Activated B cell treated with CpG ODN at 0.5 μM for 24 hours (primary cell): ENCODE measurements at regions of chr10 and their contacts with region 1.

Region 1: DNA sequence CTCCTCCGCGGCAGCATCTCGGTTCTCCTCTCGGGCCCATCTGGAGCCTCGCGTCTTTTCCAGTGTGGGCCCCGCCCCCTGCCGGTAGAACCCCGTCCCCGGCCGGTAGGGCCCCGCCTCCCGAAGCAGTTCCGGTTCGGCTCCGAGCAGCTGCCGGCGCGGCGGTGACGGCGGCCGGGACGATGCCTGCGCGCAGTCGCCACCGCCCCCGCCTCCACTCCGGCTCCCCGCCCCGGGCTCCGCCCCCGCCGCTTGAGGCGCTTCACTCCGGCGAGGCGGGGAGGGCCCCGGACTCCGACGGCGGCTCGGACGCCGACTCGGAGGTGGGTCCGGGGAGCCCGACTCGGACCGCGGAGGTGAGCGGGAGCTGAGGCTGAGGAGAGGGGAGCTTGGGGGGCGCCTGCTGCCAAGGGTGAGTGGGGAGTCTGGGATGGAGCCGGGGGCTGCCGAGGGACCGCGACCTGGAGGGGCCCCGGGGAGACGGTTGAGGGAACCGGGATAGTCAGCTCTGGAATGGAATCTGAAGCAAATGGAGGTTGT is at the start of gene SAMD8:
- DNase-seq: peak; percentile 95
- ATAC-seq: peak; percentile 81
- H3K4me3 Mint-ChIP-seq: peak within 1 kb of the TSS; percentile 90
- H3K27ac Mint-ChIP-seq: peak within 1 kb of the TSS; percentile 90
- H3K4me1 Mint-ChIP-seq: peaks cover 45% of the 10 kb centered on the region
- H3K27me3 Mint-ChIP-seq: no peaks in the 10 kb centered on the region
- CTCF ChIP-seq: no peak
- total RNA-seq, gene SAMD8: 25.8 and 29.1 TPM in 2 replicates

Region 2: GRCh38 chr10:74628136-74628535 is 483.3 kb before region 1 on chr10:
- CTCF ChIA-PET with region 1: no interaction called
- POLR2A ChIA-PET with region 1: no interaction called
- intact Hi-C with region 1: no loop called
- DNase-seq: no peak
- ATAC-seq: no peak
- H3K4me3 Mint-ChIP-seq: no peak overlapping the region
- H3K27ac Mint-ChIP-seq: no peak overlapping the region
- H3K4me1 Mint-ChIP-seq: no peaks in the 10 kb centered on the region
- H3K27me3 Mint-ChIP-seq: no peaks in the 10 kb centered on the region
- CTCF ChIP-seq: no peak

Region 3: DNA sequence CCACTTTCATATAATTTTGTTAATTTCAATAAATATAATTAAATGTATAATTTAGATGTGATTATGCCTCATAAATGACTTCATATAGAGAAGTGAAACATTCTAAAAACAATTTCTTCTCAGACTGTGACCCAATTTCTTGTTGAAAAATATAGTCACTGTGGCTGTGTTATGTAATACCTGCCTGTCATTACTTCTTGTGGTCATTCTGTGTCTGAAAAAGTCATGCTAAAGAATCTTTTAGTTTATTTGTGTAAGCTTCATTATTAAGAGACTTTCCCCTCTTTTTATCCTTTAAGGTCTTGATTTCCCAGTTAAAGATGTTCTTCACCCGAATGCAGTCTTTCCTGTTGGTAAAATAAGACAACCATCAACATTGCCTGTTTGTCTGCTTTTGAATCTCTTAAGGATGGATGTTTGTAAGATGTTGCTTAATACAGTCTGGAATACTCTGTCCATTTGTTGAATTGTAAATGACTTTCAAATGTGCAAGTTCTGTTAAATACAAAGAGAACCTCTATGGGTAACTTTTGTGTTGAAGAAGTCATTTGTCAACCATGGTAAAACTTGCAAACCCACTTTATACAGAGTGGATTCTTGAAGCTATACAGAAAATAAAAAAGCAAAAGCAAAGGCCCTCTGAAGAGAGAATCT is 269.0 kb before region 1 on chr10:
- CTCF ChIA-PET with region 1: no interaction called
- POLR2A ChIA-PET with region 1: no interaction called
- intact Hi-C with region 1: no loop called
- DNase-seq: no peak
- ATAC-seq: no peak
- H3K4me3 Mint-ChIP-seq: no peak overlapping the region
- H3K27ac Mint-ChIP-seq: no peak overlapping the region
- H3K4me1 Mint-ChIP-seq: peaks cover 16% of the 10 kb centered on the region
- H3K27me3 Mint-ChIP-seq: no peaks in the 10 kb centered on the region
- CTCF ChIP-seq: no peak

Region 4: DNA sequence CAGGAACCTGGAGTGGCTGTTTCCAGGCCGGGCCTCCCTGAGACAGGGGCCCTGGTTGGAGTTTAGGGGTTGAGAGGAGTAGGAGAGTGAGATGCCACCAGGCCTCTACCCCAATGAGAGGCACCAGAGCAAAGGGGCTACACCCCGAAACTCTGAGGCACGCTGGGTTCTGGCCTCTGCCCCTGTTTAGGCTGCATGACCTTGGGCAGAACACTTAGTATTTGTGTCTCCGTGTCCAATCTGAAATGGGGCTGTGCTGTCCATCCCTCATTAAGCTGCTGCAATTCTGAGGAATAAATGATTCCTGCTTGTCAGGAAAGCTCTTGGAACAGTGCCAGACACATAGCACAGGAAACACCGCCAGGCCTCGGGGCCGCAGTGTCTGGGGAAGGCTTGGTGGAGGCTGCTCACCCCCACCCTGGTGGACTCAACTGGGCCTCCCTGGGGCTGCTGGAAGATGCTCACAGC is 40.4 kb before region 1 on chr10:
- CTCF ChIA-PET with region 1: no interaction called
- POLR2A ChIA-PET with region 1: no interaction called
- intact Hi-C with region 1: no loop called
- DNase-seq: no peak
- ATAC-seq: no peak
- H3K4me3 Mint-ChIP-seq: no peak overlapping the region
- H3K27ac Mint-ChIP-seq: no peak overlapping the region
- H3K4me1 Mint-ChIP-seq: no peaks in the 10 kb centered on the region
- H3K27me3 Mint-ChIP-seq: no peaks in the 10 kb centered on the region
- CTCF ChIP-seq: no peak

Region 5: DNA sequence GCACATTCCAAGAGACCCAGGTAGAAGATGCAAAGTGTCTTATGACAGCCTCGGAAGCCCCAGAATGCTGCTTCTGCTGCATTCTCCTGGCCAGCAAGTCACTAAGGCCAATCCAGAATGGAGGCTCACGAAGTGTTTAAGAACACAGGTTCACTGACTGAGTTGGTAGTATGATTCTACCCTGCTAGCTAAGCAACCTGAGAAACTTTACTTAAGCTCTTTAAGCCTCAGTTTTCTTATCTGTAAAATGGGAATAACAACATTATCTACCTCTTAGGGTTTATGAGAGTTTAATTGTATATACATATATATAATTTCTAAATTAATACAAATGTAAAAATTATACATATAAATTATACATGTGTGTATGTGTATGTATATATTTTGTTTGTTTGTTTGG is 22.8 kb before region 1 on chr10:
- CTCF ChIA-PET with region 1: no interaction called
- POLR2A ChIA-PET with region 1: no interaction called
- intact Hi-C with region 1: no loop called
- DNase-seq: no peak
- ATAC-seq: no peak
- H3K4me3 Mint-ChIP-seq: no peak overlapping the region
- H3K27ac Mint-ChIP-seq: no peak overlapping the region
- H3K4me1 Mint-ChIP-seq: peaks cover 2% of the 10 kb centered on the region
- H3K27me3 Mint-ChIP-seq: peaks cover 2% of the 10 kb centered on the region
- CTCF ChIP-seq: no peak

Region 6: GRCh38 chr10:75165684-75166622 is 54.5 kb after region 1 on chr10:
- CTCF ChIA-PET with region 1: no interaction called
- POLR2A ChIA-PET with region 1: interaction called, 3 read pairs
- intact Hi-C with region 1: loop called (anchors 2 kb)
- DNase-seq: no peak
- ATAC-seq: no peak
- H3K4me3 Mint-ChIP-seq: no peak overlapping the region
- H3K27ac Mint-ChIP-seq: no peak overlapping the region
- H3K4me1 Mint-ChIP-seq: peaks cover 23% of the 10 kb centered on the region
- H3K27me3 Mint-ChIP-seq: no peaks in the 10 kb centered on the region
- CTCF ChIP-seq: no peak